Activated naive CD4-positive, alpha-beta T cell treated with anti-CD3 and anti-CD28 coated beads for 36 hours (primary cell): ENCODE measurements at regions of chr17 and their contacts with region 1.

Region 1: GRCh38 chr17:36687736-36688135 is 86.4 kb downstream of the MRM1 start:
- DNase-seq: no peak
- H3K4me3 Mint-ChIP-seq: no peak overlapping the region
- H3K27ac Mint-ChIP-seq: no peak overlapping the region
- H3K4me1 Mint-ChIP-seq: no peaks in the 10 kb centered on the region
- H3K27me3 Mint-ChIP-seq: peaks cover 1% of the 10 kb centered on the region

Region 2: DNA sequence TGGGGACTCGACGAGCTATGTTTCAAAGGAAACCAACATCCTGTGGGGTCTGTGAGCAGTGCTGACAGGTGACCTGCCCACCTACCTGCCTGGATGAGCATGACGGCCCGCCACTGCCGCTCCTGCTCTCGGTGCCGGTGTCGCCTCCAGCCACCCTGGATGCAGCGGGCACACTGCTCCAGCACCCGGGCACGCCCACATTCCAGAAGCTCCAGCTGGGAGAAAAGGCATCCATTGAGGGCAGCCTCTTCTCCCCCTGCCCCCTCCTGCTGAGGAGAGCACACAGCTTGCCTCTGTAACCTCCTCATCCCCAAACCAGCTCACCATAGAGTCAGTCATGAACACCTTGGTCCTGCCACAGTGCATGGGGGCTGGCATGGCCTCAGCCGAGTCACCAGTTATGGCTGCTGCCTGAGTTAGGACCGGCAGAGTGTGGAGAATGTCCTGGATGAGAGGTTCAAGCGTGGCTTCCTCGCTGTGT is 187.0 kb before region 1 on chr17:
- CTCF ChIA-PET with region 1: no interaction called
- intact Hi-C with region 1: no loop called
- DNase-seq: no peak
- H3K4me3 Mint-ChIP-seq: no peak overlapping the region
- H3K27ac Mint-ChIP-seq: no peak overlapping the region
- H3K4me1 Mint-ChIP-seq: peaks cover 3% of the 10 kb centered on the region
- H3K27me3 Mint-ChIP-seq: no peaks in the 10 kb centered on the region

Region 3: DNA sequence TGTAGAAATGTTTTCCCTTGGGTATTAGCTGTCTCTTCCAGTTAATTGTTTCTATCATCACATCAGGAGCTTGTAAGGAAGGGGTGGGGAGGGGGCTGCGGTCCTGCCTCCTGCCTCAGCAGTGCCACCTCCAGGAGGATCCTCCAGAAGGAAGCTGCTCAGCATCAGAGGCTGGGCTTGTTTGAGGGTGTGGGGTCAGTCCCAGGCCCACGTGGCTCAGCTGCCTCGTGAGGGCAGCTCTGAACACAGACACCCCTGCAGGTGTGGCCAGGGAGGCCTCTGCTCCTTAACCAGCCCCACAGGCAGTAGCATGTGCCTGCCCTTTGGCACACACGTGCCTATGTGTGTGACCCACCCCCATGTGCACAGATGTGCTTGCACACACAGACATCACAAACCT is 40.1 kb before region 1 on chr17:
- CTCF ChIA-PET with region 1: no interaction called
- intact Hi-C with region 1: loop called (anchors 1 kb)
- DNase-seq: no peak
- H3K4me3 Mint-ChIP-seq: no peak overlapping the region
- H3K27ac Mint-ChIP-seq: no peak overlapping the region
- H3K4me1 Mint-ChIP-seq: peaks cover 3% of the 10 kb centered on the region
- H3K27me3 Mint-ChIP-seq: peaks cover 30% of the 10 kb centered on the region

Region 4: GRCh38 chr17:36707904-36708303 is 20.2 kb after region 1 on chr17:
- CTCF ChIA-PET with region 1: no interaction called
- intact Hi-C with region 1: no loop called
- DNase-seq: no peak
- H3K4me3 Mint-ChIP-seq: no peak overlapping the region
- H3K27ac Mint-ChIP-seq: no peak overlapping the region
- H3K4me1 Mint-ChIP-seq: peaks cover 5% of the 10 kb centered on the region
- H3K27me3 Mint-ChIP-seq: peaks cover 21% of the 10 kb centered on the region